B cell (primary cell): ENCODE measurements at regions of chr2 and their contacts with region 1.

Region 1: GRCh38 chr2:100242891-100243619 is 79.2 kb downstream of the LONRF2 start:
- DNase-seq: peak; percentile 80
- ATAC-seq: peak; percentile 29
- H3K4me3 ChIP-seq: no peak overlapping the region
- H3K4me3 Mint-ChIP-seq: peak overlapping the region; percentile 57
- H3K27ac ChIP-seq: no peak overlapping the region
- H3K27ac Mint-ChIP-seq: peak overlapping the region; percentile 11
- H3K4me1 ChIP-seq: peaks cover 70 to 75% of the 10 kb centered on the region in 2 donors
- H3K4me1 Mint-ChIP-seq: peaks cover 71% of the 10 kb centered on the region
- H3K27me3 ChIP-seq: peaks cover 0 to 3% (median 1%) of the 10 kb centered on the region in 4 experiments
- H3K27me3 Mint-ChIP-seq: peaks cover 19% of the 10 kb centered on the region
- CTCF ChIP-seq: peak; percentile 84

Region 2: GRCh38 chr2:99337113-99338028 is 905.7 kb before region 1 on chr2 and contains the start of gene EIF5B:
- CTCF ChIA-PET with region 1: no interaction called
- POLR2A ChIA-PET with region 1: no interaction called
- intact Hi-C with region 1: loop called (anchors 5 kb)
- DNase-seq: peak; percentile 96
- ATAC-seq: peak; percentile 63
- H3K4me3 ChIP-seq: peak within 1 kb of the TSS; percentile 78 to 95 (median 87)
- H3K4me3 Mint-ChIP-seq: no peak within 1 kb of the TSS
- H3K27ac ChIP-seq: peak within 1 kb of the TSS; percentile 90 to 93
- H3K27ac Mint-ChIP-seq: no peak within 1 kb of the TSS
- H3K4me1 ChIP-seq: peaks cover 14 to 31% of the 10 kb centered on the region in 2 donors
- H3K4me1 Mint-ChIP-seq: peaks cover 29% of the 10 kb centered on the region
- H3K27me3 ChIP-seq: no peaks in the 10 kb centered on the region
- H3K27me3 Mint-ChIP-seq: no peaks in the 10 kb centered on the region
- CTCF ChIP-seq: peak; percentile 70
- total RNA-seq, gene EIF5B: 32.8 and 33.0 TPM in 2 replicates

Region 3: GRCh38 chr2:99818842-99819241 is 424.2 kb before region 1 on chr2:
- CTCF ChIA-PET with region 1: interaction called, 12 read pairs
- POLR2A ChIA-PET with region 1: no interaction called
- intact Hi-C with region 1: no loop called
- DNase-seq: no peak
- ATAC-seq: no peak
- H3K4me3 ChIP-seq: no peak overlapping the region
- H3K4me3 Mint-ChIP-seq: no peak overlapping the region
- H3K27ac ChIP-seq: no peak overlapping the region
- H3K27ac Mint-ChIP-seq: no peak overlapping the region
- H3K4me1 ChIP-seq: no peaks in the 10 kb centered on the region
- H3K4me1 Mint-ChIP-seq: no peaks in the 10 kb centered on the region
- H3K27me3 ChIP-seq: no peaks in the 10 kb centered on the region
- H3K27me3 Mint-ChIP-seq: no peaks in the 10 kb centered on the region
- CTCF ChIP-seq: no peak

Region 4: DNA sequence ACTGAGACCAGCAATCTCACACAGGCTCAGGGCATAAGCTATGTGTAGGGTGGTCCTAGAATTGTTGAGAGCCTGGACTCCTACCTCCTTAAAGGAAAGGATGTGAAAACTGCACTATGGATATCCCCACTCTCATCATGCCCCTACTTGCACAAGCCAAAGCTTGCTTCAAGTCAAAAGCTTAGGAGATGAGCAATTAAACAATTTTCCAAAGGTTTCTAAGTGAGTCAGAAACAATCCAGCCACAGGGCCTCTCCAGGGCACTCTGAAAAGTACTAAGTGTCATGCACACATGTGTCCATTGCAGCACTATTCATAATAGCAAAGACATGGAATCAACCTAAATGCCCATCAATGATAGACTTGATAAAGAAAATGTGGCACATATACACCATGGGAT is 316.1 kb before region 1 on chr2:
- CTCF ChIA-PET with region 1: interaction called, 5 read pairs
- POLR2A ChIA-PET with region 1: interaction called, 4 read pairs
- intact Hi-C with region 1: loop called (anchors 10 kb)
- DNase-seq: no peak
- ATAC-seq: no peak
- H3K4me3 ChIP-seq: no peak overlapping the region
- H3K4me3 Mint-ChIP-seq: peak overlapping the region; percentile 29
- H3K27ac ChIP-seq: peak overlapping the region; percentile 80 to 93
- H3K27ac Mint-ChIP-seq: peak overlapping the region; percentile 66
- H3K4me1 ChIP-seq: peaks cover 55 to 68% of the 10 kb centered on the region in 2 donors
- H3K4me1 Mint-ChIP-seq: peaks cover 83% of the 10 kb centered on the region
- H3K27me3 ChIP-seq: no peaks in the 10 kb centered on the region
- H3K27me3 Mint-ChIP-seq: no peaks in the 10 kb centered on the region
- CTCF ChIP-seq: no peak

Region 5: GRCh38 chr2:100113990-100114433 is 129.0 kb before region 1 on chr2:
- CTCF ChIA-PET with region 1: interaction called, 7 read pairs
- POLR2A ChIA-PET with region 1: interaction called, 4 read pairs
- intact Hi-C with region 1: loop called (anchors 1 kb)
- DNase-seq: peak; percentile 74
- ATAC-seq: peak; percentile 50
- H3K4me3 ChIP-seq: peak overlapping the region in 3 of 5 experiments; percentile 16 to 39 (median 25)
- H3K4me3 Mint-ChIP-seq: peak overlapping the region; percentile 78
- H3K27ac ChIP-seq: peak overlapping the region; percentile 72 to 84
- H3K27ac Mint-ChIP-seq: peak overlapping the region; percentile 93
- H3K4me1 ChIP-seq: peaks cover 62 to 67% of the 10 kb centered on the region in 2 donors
- H3K4me1 Mint-ChIP-seq: peaks cover 81% of the 10 kb centered on the region
- H3K27me3 ChIP-seq: no peaks in the 10 kb centered on the region
- H3K27me3 Mint-ChIP-seq: no peaks in the 10 kb centered on the region
- CTCF ChIP-seq: no peak

Region 6: GRCh38 chr2:100178051-100178788 is 64.8 kb before region 1 on chr2:
- CTCF ChIA-PET with region 1: interaction called, 7 read pairs
- POLR2A ChIA-PET with region 1: no interaction called
- intact Hi-C with region 1: loop called (anchors 1 kb)
- DNase-seq: peak; percentile 66
- ATAC-seq: peak; percentile 73
- H3K4me3 ChIP-seq: no peak overlapping the region
- H3K4me3 Mint-ChIP-seq: no peak overlapping the region
- H3K27ac ChIP-seq: no peak overlapping the region
- H3K27ac Mint-ChIP-seq: peak overlapping the region; percentile 27
- H3K4me1 ChIP-seq: peaks cover 3 to 9% of the 10 kb centered on the region in 2 donors
- H3K4me1 Mint-ChIP-seq: peaks cover 20% of the 10 kb centered on the region
- H3K27me3 ChIP-seq: no peaks in the 10 kb centered on the region
- H3K27me3 Mint-ChIP-seq: no peaks in the 10 kb centered on the region
- CTCF ChIP-seq: peak; percentile 53

Region 7: DNA sequence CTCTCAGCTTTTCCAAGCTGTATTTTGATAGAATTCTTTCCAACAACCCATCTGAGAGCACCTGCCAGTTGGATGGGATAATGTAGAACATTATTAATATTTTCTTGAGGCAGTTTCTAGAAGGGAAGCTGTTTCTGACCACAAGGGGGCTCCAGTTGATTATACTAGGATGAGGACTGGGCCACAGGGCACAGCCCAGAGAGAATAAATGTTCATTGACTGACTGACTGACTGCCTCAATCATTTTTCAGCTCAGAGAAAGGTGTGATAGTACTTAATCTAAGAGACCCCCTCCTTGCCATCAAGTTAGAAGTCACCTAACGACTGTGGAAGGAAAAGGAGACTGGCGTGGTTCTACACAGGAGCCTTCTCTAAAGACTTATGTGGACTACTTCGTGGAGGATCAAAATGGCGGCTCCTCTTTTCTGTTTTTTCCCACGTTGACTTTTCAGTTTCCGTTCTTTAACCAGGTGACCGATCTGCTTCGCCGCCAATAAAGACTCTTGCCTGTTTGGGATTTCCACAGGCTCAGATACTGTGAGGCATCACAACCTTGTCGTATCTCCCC is 1176.1 kb after region 1 on chr2:
- CTCF ChIA-PET with region 1: no interaction called
- POLR2A ChIA-PET with region 1: no interaction called
- intact Hi-C with region 1: no loop called
- DNase-seq: peak; percentile 78
- ATAC-seq: peak; percentile 82
- H3K4me3 ChIP-seq: no peak overlapping the region
- H3K4me3 Mint-ChIP-seq: no peak overlapping the region
- H3K27ac ChIP-seq: no peak overlapping the region
- H3K27ac Mint-ChIP-seq: no peak overlapping the region
- H3K4me1 ChIP-seq: no peaks in the 10 kb centered on the region
- H3K4me1 Mint-ChIP-seq: no peaks in the 10 kb centered on the region
- H3K27me3 ChIP-seq: peaks cover 0 to 5% (median 0%) of the 10 kb centered on the region in 4 experiments
- H3K27me3 Mint-ChIP-seq: peaks cover 8% of the 10 kb centered on the region
- CTCF ChIP-seq: peak; percentile 88